WTC11 (cell line): ENCODE measurements at regions of chr3 and their contacts with region 1.

Region 1: DNA sequence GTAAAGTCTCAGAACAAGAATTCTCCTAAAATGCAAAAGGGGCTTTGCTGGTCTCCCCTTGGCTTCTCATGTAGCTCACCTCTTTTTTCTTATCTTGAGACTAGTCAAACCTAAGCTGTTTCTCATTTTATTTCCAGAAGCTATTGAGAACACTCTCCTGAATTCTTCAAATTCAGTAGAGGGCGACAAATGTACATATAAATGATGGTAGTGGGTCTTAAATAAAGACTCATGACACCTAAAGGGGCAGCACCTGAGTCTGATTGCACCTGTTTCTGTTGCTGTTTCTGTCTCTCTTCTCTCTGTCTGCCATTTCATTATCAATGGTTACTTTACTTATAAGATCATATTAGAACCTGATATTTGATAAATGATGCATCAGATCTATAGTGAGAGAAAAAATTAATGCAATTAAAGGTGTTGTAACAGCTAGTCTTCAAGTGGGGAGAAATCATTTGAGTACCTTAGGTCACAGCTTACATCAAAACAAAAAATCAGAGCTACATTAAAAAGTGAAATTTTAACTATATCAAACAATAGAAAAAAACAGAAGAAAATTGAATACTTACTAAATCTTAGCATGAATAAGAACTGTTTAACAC is 7.0 kb downstream of the ADIPOQ start:
- DNase-seq: no peak
- ATAC-seq: peak; percentile 88
- H3K4me3 Mint-ChIP-seq: no peak overlapping the region
- H3K27ac Mint-ChIP-seq: no peak overlapping the region
- H3K4me1 Mint-ChIP-seq: no peaks in the 10 kb centered on the region; the same call in 1 of the 2 replicates
- H3K27me3 Mint-ChIP-seq: no peaks in the 10 kb centered on the region; the same call in 1 of the 2 replicates
- CTCF ChIP-seq: no peak

Region 2: GRCh38 chr3:186653080-186653707 is 196.3 kb before region 1 on chr3:
- CTCF ChIA-PET with region 1: no interaction called
- POLR2A ChIA-PET with region 1: no interaction called
- DNase-seq: no peak
- ATAC-seq: no peak
- H3K4me3 Mint-ChIP-seq: no peak overlapping the region
- H3K27ac Mint-ChIP-seq: no peak overlapping the region
- H3K4me1 Mint-ChIP-seq: peaks cover 22% of the 10 kb centered on the region
- H3K27me3 Mint-ChIP-seq: peaks cover 9% of the 10 kb centered on the region; the same call in 1 of the 2 replicates
- CTCF ChIP-seq: no peak

Region 3: GRCh38 chr3:186930641-186931531 is 81.4 kb after region 1 on chr3:
- CTCF ChIA-PET with region 1: interaction called, 39 read pairs
- POLR2A ChIA-PET with region 1: no interaction called
- DNase-seq: peak; percentile 87
- ATAC-seq: peak; percentile 68
- H3K4me3 Mint-ChIP-seq: peak overlapping the region; percentile 92
- H3K27ac Mint-ChIP-seq: peak overlapping the region; percentile 87
- H3K4me1 Mint-ChIP-seq: peaks cover 36% of the 10 kb centered on the region
- H3K27me3 Mint-ChIP-seq: peaks cover 19% of the 10 kb centered on the region
- CTCF ChIP-seq: no peak

Region 4: DNA sequence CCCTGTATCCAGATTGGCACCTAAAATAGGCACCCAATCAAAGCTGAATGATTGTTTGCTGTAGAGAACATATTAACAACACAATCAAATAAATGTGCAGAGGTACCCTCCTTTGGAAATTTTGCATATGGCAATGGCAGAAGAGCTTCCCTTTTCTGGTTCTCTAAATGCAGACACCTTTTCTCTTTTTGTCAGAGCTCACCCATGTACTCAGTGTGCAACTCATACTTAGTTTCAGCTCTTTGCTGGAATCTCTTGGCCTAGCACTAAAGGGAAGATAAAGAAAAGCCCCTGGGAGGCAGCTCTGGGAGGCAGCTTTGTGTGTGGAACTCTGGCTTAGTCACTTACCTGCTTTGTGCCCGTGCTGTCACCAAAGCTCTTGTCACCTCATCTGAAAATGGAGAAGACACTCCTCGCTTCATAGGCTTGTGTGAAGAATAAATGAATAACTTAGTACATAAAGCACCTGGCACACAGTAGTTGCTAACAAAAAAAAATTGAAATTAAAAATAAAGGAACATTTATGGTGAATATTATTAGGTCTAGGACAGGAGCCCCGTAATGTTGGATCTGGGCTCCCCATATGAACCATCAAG is 109.7 kb after region 1 on chr3:
- CTCF ChIA-PET with region 1: interaction called, 20 read pairs
- POLR2A ChIA-PET with region 1: no interaction called
- DNase-seq: no peak
- ATAC-seq: no peak
- H3K4me3 Mint-ChIP-seq: no peak overlapping the region
- H3K27ac Mint-ChIP-seq: no peak overlapping the region
- H3K4me1 Mint-ChIP-seq: peaks cover 64% of the 10 kb centered on the region
- H3K27me3 Mint-ChIP-seq: no peaks in the 10 kb centered on the region
- CTCF ChIP-seq: no peak

Region 5: GRCh38 chr3:186976837-186977750 is 127.6 kb after region 1 on chr3:
- CTCF ChIA-PET with region 1: interaction called, 15 read pairs
- POLR2A ChIA-PET with region 1: no interaction called
- DNase-seq: peak; percentile 44
- ATAC-seq: peak; percentile 91
- H3K4me3 Mint-ChIP-seq: peak overlapping the region; percentile 22
- H3K27ac Mint-ChIP-seq: peak overlapping the region; percentile 95
- H3K4me1 Mint-ChIP-seq: peaks cover 32% of the 10 kb centered on the region
- H3K27me3 Mint-ChIP-seq: no peaks in the 10 kb centered on the region; the same call in 1 of the 2 replicates
- CTCF ChIP-seq: no peak

Region 6: GRCh38 chr3:187066228-187066995 is 216.9 kb after region 1 on chr3:
- CTCF ChIA-PET with region 1: interaction called, 21 read pairs
- POLR2A ChIA-PET with region 1: no interaction called
- DNase-seq: peak; percentile 68
- ATAC-seq: peak; percentile 88
- H3K4me3 Mint-ChIP-seq: no peak overlapping the region
- H3K27ac Mint-ChIP-seq: peak overlapping the region; percentile 30; the same call in 1 of the 2 replicates
- H3K4me1 Mint-ChIP-seq: peaks cover 40% of the 10 kb centered on the region
- H3K27me3 Mint-ChIP-seq: no peaks in the 10 kb centered on the region
- CTCF ChIP-seq: peak; percentile 15; the same call in 1 of the 2 replicates

Region 7: DNA sequence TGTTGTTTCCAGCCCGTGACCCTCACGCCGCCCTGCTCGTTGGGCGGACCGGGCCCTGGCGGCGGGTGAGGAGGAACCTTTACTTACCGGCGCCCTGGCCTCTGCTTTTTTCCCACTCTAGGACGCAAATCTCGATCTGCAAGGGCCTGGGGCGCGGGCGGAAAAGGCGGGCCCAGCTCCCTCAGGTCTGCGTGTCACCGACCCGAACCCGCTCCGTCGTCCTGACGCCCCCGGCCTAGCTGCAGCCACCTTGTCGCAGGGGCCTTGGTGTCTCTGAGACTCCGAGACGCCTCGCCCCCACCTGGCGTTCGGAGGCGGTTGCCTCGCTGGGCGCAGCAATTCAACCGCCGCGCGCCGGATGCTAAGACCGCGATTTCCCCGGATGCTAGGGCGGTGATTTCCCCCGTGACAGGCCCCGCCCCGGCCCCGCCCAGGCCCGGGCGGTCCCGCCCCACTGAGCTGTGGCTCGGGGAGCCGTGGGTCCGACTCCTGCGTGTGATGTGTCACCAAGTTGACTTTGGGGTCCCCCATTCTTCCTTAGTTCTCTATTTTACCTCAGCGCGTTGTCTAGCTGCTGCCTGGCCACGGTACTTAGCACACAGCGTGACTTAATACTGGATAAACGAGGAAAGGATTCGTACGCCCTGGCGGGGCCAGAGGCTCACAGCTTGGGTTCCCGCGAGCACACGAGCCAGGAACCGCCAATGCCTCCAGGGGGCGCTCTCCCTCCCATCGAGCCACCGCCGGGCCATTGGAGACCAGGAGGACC is 289.8 kb after region 1 on chr3 and contains the start of gene RPL39L:
- CTCF ChIA-PET with region 1: interaction called, 17 read pairs
- POLR2A ChIA-PET with region 1: no interaction called
- DNase-seq: peak; percentile 91
- ATAC-seq: peak; percentile 91
- H3K4me3 Mint-ChIP-seq: peak within 1 kb of the TSS; percentile 80
- H3K27ac Mint-ChIP-seq: peak within 1 kb of the TSS; percentile 91
- H3K4me1 Mint-ChIP-seq: peaks cover 6% of the 10 kb centered on the region
- H3K27me3 Mint-ChIP-seq: no peaks in the 10 kb centered on the region
- CTCF ChIP-seq: peak; percentile 97
- total RNA-seq, gene RPL39L: 78.3 to 79.5 TPM (median 79.0 TPM) in 3 replicates

Region 8: DNA sequence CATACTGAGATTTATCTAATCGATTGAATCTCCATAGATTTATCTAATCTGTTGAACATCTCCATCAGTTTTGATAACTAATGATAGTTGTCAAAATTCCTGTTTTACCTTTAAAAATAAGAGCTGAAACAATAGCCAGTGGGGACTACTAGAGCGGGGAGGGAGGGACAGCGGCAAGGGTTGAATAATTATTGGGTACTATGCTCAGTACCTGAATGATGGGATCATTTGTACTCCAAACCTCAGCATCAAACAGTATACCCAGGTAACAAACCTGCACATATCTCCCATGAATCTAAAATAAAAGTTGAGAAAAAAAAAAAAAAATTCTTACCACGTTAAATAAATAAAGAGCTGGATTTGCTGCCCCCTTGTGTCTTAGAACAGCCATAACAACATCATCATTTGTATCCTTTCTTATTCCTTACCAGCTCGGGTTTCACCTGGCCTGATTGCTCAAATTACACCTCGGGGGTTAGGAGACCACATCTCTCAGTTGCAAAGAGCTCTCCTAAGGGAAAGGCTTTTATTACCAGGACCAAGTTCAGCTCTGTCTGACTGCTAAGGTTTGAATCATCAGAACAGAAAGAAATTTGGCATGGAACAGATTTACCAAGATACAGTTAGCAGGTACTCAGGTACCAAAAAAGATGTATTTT is 315.5 kb after region 1 on chr3:
- CTCF ChIA-PET with region 1: interaction called, 40 read pairs
- POLR2A ChIA-PET with region 1: no interaction called
- DNase-seq: peak; percentile 53
- ATAC-seq: peak; percentile 93
- H3K4me3 Mint-ChIP-seq: peak overlapping the region; percentile 2
- H3K27ac Mint-ChIP-seq: peak overlapping the region; percentile 42; the same call in 1 of the 2 replicates
- H3K4me1 Mint-ChIP-seq: peaks cover 72% of the 10 kb centered on the region
- H3K27me3 Mint-ChIP-seq: no peaks in the 10 kb centered on the region
- CTCF ChIP-seq: peak; percentile 69